ENCODE measurements at regions of chr1 and their contacts with region 1.

Region 1: GRCh38 chr1:8721679-8722324 is 95.6 kb downstream of the RERE start:
- DNase-seq: no peak
- ATAC-seq: no peak
- H3K4me3 ChIP-seq: no peak overlapping the region
- H3K27ac ChIP-seq: no peak overlapping the region
- H3K4me1 ChIP-seq: peaks cover 0 to 18% (median 7%) of the 10 kb centered on the region in 9 donors
- H3K27me3 ChIP-seq: no peaks in the 10 kb centered on the region
- CTCF ChIP-seq: no peak

Region 2: DNA sequence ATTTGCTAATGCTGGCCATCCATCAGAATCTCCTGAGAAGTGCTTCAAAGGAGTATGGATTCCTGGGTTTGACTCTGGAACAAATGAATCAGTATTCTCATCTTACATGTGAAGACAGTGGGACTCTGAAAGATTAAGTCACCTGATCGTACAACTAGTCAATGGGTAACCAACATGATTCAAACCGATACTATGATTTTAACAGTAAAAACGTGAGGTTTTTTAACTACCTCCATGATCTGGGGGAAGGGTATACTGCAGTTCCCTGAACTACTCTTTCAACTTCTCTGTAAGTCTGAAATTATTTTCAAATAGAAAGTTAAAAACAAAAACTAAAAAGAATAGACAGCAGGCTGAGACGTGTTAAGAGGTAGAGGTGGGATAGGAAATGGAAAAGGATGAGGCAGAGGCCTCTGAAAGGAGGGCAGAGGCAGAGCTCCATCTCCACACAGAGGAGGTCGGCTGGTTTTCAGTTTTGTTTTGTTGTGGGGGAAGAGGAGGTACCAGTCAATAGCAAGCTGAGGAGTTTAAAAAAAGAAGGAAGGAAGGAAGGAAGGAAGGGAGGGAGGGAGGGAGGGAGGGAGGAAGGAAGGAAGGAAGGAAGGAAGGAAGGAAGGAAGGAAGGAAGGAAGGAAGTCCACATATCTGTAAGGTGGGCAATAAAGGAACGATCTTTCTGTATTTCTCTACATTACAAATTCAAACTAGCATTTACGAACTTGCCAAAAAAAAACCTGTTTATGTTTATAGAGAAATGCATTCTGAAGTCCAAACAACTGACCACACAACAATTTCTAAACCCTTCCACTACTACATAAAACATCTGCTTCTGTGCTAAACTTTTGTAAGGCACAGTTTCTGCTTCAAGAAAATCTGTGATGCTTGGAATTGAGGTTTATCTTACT is 117.5 kb before region 1 on chr1:
- intact Hi-C with region 1: no loop called
- DNase-seq: no peak
- ATAC-seq: no peak
- H3K4me3 ChIP-seq: no peak overlapping the region
- H3K27ac ChIP-seq: peak overlapping the region in 3 of 10 donors; percentile 17 to 57 (median 36)
- H3K4me1 ChIP-seq: peaks cover 0 to 34% (median 20%) of the 10 kb centered on the region in 9 donors
- H3K27me3 ChIP-seq: no peaks in the 10 kb centered on the region
- CTCF ChIP-seq: no peak

Region 3: DNA sequence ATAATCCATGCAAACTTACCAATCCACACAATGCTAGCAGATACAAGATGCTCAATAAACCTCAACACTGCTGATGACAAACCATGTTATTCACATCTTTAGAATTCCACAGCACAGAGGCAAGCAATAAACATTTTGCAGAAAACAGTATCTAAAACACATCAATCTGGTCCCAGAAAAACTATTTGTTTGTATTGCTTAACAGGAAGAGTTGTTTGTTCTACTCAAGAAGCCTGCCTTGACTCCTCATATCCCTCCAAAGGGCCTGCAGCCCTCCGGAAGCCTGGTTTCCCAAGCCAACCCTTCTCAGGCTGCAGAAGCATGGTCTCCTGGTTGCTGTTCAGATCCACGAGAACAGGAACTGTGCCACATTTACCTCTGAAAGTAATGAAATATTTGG is 44.0 kb before region 1 on chr1:
- intact Hi-C with region 1: loop called in 6 of 10 experiments (anchors 2 to 10 kb)
- DNase-seq: no peak
- ATAC-seq: no peak
- H3K4me3 ChIP-seq: no peak overlapping the region
- H3K27ac ChIP-seq: no peak overlapping the region
- H3K4me1 ChIP-seq: peaks cover 0 to 40% (median 27%) of the 10 kb centered on the region in 9 donors
- H3K27me3 ChIP-seq: no peaks in the 10 kb centered on the region
- CTCF ChIP-seq: no peak